ENCODE measurements at regions of chr12 and their contacts with region 1.

Region 1: DNA sequence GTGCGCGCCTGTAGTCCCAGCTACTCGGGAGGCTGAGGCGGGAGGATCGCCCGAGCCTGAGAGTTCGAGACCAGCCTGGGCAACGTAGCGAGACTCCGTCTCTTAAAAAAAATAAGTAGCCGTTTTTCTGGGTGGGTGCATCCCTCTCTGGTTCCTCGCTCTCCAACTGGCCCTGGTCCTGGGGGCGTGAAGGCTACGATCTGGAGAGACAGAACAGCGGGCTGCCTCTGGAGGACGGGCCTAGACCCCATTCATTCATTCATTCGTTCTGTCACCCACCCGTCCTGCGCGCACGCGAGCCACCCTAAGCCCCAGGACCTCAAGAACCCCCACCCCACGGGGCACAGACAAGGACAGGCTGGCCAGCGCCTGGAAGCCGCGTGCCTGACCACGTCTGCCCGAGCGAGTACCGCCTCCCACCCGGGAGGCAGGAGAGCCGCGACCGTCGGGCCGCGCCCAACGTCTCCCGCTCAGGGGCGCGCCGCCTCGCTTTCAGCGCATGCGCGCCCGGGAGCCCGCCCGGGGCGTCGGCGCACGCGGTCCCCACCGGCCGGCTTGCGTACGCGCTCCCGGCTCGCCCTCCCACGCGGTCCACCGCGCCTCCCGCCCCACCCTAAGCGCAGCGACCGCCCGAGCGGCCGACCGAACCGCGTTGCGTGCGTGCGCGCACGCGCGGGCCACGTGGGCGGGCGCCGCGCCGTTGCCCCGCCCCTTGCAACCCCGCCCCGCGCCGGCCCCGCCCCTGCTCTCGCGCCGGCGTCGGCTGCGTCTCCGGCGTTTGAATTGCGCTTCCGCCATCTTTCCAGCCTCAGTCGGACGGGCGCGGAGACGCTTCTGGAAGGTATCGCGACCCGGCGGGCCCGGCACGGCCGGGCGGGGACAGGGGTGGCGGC is at the start of gene RAN:
- DNase-seq: peak; percentile 95 to 97
- ATAC-seq: peak; percentile 93 to 96 (median 96)
- H3K4me3 ChIP-seq: peak within 1 kb of the TSS; percentile 75
- H3K27ac ChIP-seq: peak within 1 kb of the TSS; percentile 87
- H3K4me1 ChIP-seq: peaks cover 20% of the 10 kb centered on the region
- H3K27me3 ChIP-seq: no peaks in the 10 kb centered on the region
- CTCF ChIP-seq: no peak
- total RNA-seq, gene RAN: 338 to 721 (median 445) TPM

Region 2: GRCh38 chr12:130838951-130839769 is 32.4 kb before region 1 on chr12 and contains the start of gene STX2:
- intact Hi-C with region 1: loop called in 1 of 2 experiments (anchors 5 kb)
- DNase-seq: peak; percentile 88 to 93
- ATAC-seq: peak; percentile 98 to 99 (median 98)
- H3K4me3 ChIP-seq: peak within 1 kb of the TSS; percentile 77
- H3K27ac ChIP-seq: peak within 1 kb of the TSS; percentile 60
- H3K4me1 ChIP-seq: peaks cover 12% of the 10 kb centered on the region
- H3K27me3 ChIP-seq: no peaks in the 10 kb centered on the region
- CTCF ChIP-seq: peak; percentile 5
- total RNA-seq, gene STX2: 5.5 to 7.2 (median 6.2) TPM

Measured in psoas muscle (tissue), 8 donors.